ENCODE measurements at regions of chr1 and their contacts with region 1.

Region 1: DNA sequence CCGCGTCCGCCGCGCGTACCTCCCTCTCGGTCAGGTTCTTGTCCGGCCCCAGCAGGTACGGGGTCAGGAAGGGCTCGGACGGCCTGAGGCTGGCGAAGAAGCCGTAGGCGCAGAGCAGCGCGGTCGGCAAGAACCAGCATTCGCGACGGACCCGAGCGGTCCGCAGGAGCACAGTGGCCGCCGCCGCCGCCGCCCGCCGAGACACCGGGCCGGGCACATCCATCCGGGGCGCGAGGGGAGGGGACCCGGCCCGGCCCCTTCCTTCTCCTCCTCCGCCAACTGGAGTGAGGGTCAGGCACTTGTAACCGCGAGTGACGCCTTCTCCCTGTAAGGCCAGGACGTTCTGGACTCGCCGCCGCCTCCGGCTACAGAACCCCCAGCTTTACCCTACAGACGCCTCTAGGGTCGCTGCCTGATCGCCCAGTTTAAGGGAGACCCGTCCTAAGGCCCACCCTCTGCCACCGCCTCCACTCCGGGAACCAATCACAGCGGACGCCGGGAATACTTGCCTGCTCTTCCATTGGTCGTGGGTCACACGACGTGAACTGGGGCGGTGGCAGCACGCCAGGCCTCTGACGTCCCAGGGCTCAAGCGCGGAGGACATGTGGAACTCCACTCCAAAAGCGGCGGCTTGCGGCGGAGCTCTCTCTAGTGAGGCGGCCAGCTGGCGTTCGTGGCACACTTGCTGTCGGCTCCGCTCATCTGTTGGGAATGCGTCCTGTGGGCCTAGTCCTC is at the start of gene SLC19A2:
- DNase-seq: peak; percentile 97
- ATAC-seq: peak; percentile 99
- H3K4me3 ChIP-seq: peak within 1 kb of the TSS; percentile 68 to 83
- H3K27ac ChIP-seq: peak within 1 kb of the TSS; percentile 58
- H3K4me1 ChIP-seq: peaks cover 4 to 23% of the 10 kb centered on the region in 2 experiments; a peak in 3 of 4 replicates
- H3K27me3 ChIP-seq: no peaks in the 10 kb centered on the region
- CTCF ChIP-seq: 0 out of 6 replicates have a peak, but pooled peaks of 1 of the 3 experiments have one; percentile 8
- POLR2A ChIP-seq: peak; percentile 95
- RAD21 ChIP-seq: 0 out of 2 replicates have a peak, but pooled peaks have one; percentile 3
- total RNA-seq, gene SLC19A2: 10.1 TPM

Region 2: GRCh38 chr1:169529068-169529696 is 43.5 kb after region 1 on chr1:
- CTCF ChIA-PET with region 1: no interaction called
- POLR2A ChIA-PET with region 1: interaction called, 5 read pairs
- RAD21 ChIA-PET with region 1: interaction called in 1 of 2 experiments, 3 read pairs
- intact Hi-C with region 1: loop called (anchors 5 kb)
- DNase-seq: peak; percentile 85
- ATAC-seq: peak; percentile 96
- H3K4me3 ChIP-seq: peak overlapping the region; percentile 17 to 42
- H3K27ac ChIP-seq: no peak overlapping the region; the same call in 1 of the 2 replicates
- H3K4me1 ChIP-seq: peaks cover 23 to 40% of the 10 kb centered on the region in 2 experiments
- H3K27me3 ChIP-seq: no peaks in the 10 kb centered on the region
- CTCF ChIP-seq: no peak
- POLR2A ChIP-seq: no peak
- RAD21 ChIP-seq: peak; percentile 31; the same call in 1 of the 2 replicates

Measured in HCT116 (cell line).